ENCODE measurements at regions of chr2 and their contacts with region 1.

Region 1: GRCh38 chr2:27095745-27096651 is 9.4 kb downstream of the KHK start:
- DNase-seq: peak; percentile 55
- H3K4me3 ChIP-seq: peak overlapping the region in 1 of 4 donors; percentile 34
- H3K27ac ChIP-seq: no peak overlapping the region
- H3K4me1 ChIP-seq: peaks cover 3 to 14% (median 9%) of the 10 kb centered on the region in 4 donors
- H3K27me3 ChIP-seq: no peaks in the 10 kb centered on the region
- CTCF ChIP-seq: no peak
- EP300 ChIP-seq: no peak
- POLR2A ChIP-seq: no peak

Region 2: DNA sequence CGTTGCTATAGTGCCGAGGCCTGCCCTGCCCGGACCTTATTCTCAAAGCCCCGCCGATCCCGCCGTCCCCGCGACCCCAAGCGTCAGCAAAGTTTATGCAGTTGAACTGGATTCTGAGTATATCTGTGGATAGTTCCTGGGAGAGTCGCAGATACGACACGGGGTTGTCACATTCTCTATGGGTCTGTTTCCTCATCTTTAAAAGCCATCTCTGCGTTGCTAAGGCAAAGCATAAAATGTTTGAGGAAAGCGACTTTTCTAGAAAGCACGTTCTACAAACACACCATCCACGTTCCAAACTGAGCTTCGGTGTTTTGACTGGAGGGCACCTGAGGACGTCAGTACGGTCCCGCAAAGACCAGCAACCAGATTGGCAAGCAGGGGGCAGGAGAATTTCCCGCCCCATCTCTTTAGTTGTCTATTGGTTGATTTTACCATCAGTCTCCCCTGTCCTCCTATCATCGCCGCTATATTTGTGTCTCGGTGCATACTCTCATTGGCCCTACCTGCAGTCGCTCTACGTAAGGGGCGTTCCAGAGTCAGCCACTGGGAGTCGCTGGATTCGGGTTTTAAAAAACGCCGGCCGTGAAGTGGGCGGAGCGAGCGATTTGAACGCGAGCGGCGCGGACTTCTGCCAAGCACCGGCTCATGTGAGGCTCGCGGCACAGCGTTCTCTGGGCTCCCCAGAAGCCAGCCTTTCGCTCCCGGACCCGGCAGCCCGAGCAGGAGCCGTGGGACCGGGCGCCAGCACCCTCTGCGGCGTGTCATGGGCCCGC is 310.4 kb before region 1 on chr2 and contains the start of gene CENPA:
- in situ Hi-C with region 1: no loop called
- intact Hi-C with region 1: no loop called
- DNase-seq: peak; percentile 98
- H3K4me3 ChIP-seq: peak within 1 kb of the TSS; percentile 34 to 100 (median 78)
- H3K27ac ChIP-seq: peak within 1 kb of the TSS; percentile 61 to 77 (median 68)
- H3K4me1 ChIP-seq: peaks cover 0 to 29% (median 17%) of the 10 kb centered on the region in 4 donors
- H3K27me3 ChIP-seq: peaks cover 4% of the 10 kb centered on the region
- CTCF ChIP-seq: peak; percentile 31 to 54 (median 35)
- EP300 ChIP-seq: no peak
- POLR2A ChIP-seq: peak; percentile 30
- total RNA-seq, gene CENPA: 1.1 to 14.9 TPM in 2 of 4 donors, not detected in the others

Region 3: DNA sequence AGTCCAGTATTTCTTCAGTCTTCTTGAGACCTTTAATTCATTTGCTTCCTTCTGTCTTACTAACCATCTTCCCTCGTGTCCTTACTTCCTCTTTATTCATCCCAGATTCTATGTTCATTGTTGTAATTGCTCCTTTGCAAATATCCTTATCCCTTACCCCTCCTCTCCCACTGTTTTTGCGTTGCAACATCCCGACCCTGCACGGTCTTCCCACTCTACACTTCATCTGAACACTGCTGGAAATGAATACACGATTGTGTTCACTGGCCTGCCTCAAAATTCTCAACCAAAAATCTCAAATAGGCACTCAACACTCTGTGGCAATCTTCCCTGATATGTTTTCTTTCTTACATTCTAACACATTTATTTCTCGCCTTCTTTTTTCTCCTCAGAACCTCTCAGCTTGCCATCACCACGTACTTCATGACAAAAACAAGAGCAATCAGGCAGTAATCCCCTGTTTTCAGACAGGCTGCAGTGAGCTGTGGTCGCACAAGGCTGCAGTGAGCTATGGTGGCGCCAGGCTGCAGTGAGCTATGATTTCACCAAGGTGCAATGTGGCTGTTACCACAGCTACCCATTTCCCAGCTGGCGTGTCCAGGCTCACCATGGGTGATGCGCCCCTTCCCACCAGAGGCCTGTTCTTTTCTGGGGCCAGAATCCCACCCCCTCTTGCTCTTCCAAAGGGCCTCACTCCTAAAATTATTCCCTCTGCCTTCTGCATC is 78.5 kb after region 1 on chr2:
- in situ Hi-C with region 1: no loop called
- intact Hi-C with region 1: no loop called
- DNase-seq: no peak
- H3K4me3 ChIP-seq: no peak overlapping the region
- H3K27ac ChIP-seq: no peak overlapping the region
- H3K4me1 ChIP-seq: peaks cover 0 to 15% (median 8%) of the 10 kb centered on the region in 4 donors
- H3K27me3 ChIP-seq: peaks cover 15% of the 10 kb centered on the region
- CTCF ChIP-seq: no peak
- EP300 ChIP-seq: no peak
- POLR2A ChIP-seq: no peak

Region 4: GRCh38 chr2:27191053-27191829 is 95.2 kb after region 1 on chr2:
- in situ Hi-C with region 1: loop called in 1 of 4 experiments (anchors 5 kb)
- intact Hi-C with region 1: no loop called
- DNase-seq: peak; percentile 53
- H3K4me3 ChIP-seq: no peak overlapping the region
- H3K27ac ChIP-seq: no peak overlapping the region
- H3K4me1 ChIP-seq: no peaks in the 10 kb centered on the region
- H3K27me3 ChIP-seq: no peaks in the 10 kb centered on the region
- CTCF ChIP-seq: peak; percentile 40 to 56 (median 43)
- EP300 ChIP-seq: no peak
- POLR2A ChIP-seq: no peak

Region 5: DNA sequence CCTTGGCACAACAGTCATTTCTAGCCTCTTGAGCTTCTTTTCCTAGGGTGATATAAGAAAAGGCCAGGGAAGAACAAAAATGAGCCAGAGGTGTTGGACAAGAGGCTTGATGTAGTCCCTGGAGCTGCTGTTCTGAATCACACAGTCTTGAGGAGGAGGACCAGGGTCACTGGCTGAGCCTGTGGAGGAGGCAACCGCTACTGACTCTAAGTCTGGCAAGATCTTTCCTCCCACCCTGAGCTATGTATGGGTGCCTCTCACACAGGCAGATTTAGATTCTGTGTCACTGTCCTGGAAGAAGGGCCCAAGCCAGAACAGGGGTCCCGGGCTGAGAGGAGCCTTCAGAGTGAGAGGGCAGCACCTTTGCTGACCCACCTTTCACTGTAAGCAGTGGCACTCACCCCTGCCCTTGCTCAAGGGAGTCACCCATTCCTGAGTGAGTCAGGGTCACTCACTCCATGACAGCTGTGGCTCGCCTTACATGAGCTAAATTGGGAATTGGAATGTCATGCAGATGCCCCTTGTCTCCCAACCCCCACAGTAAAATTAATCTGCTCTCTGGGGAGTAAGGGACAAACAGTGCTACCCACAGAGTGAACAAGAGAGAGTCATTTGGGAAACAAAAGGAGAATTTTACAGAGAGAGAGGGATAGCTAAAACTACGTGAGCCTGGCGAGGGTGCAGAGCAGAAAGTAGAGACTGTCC is 186.0 kb after region 1 on chr2 and contains the start of gene TRIM54:
- in situ Hi-C with region 1: loop called in 3 of 4 experiments (anchors 5 to 10 kb)
- intact Hi-C with region 1: loop called (anchors 2 kb)
- DNase-seq: no peak
- H3K4me3 ChIP-seq: no peak within 1 kb of the TSS
- H3K27ac ChIP-seq: no peak within 1 kb of the TSS
- H3K4me1 ChIP-seq: no peaks in the 10 kb centered on the region
- H3K27me3 ChIP-seq: peaks cover 45% of the 10 kb centered on the region
- CTCF ChIP-seq: no peak
- EP300 ChIP-seq: no peak
- POLR2A ChIP-seq: no peak
- total RNA-seq, gene TRIM54: 0.40 to 1.9 (median 1.2) TPM in 3 of 4 donors, not detected in the other